PC-9 (cell line): ENCODE measurements at regions of chr14 and their contacts with region 1.

Region 1: GRCh38 chr14:74062829-74063190 is 21.4 kb downstream of the ALDH6A1 start:
- DNase-seq: peak; percentile 44 to 87
- H3K4me3 ChIP-seq: peak overlapping the region; percentile 7; the same call in 1 of the 2 replicates
- H3K27ac ChIP-seq: peak overlapping the region; percentile 75
- H3K4me1 ChIP-seq: peaks cover 40% of the 10 kb centered on the region
- H3K27me3 ChIP-seq: no peaks in the 10 kb centered on the region
- CTCF ChIP-seq: no peak

Region 2: DNA sequence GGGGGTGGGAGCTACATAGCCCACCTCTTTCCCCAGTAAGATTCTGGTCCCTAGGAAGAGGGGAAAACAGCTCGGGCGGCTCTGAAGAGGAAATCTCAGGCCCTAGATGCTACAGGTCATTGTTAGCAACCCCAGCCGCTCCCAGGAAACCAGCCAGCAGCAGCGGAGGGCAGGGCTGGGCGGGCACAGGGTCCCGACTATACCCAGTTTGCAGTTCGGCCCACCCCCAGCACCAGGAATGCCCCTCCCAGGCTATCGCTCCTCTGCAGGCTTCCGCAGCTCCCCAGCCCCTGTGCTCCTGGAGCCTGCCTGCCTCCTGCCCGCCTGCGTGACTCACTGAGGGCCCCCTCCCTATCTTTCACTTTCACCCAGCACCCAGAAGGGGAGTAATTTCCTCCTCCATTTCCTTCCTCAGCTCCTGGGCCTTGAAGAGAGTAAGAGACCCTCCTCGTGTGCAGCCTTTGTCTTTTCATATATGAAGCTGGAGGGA is 321.4 kb before region 1 on chr14:
- CTCF ChIA-PET with region 1: no interaction called
- POLR2A ChIA-PET with region 1: no interaction called
- intact Hi-C with region 1: no loop called
- DNase-seq: peak; percentile 84 to 93
- H3K4me3 ChIP-seq: peak overlapping the region; percentile 46; the same call in 1 of the 2 replicates
- H3K27ac ChIP-seq: peak overlapping the region; percentile 90
- H3K4me1 ChIP-seq: peaks cover 71% of the 10 kb centered on the region
- H3K27me3 ChIP-seq: no peaks in the 10 kb centered on the region
- CTCF ChIP-seq: no peak

Region 3: DNA sequence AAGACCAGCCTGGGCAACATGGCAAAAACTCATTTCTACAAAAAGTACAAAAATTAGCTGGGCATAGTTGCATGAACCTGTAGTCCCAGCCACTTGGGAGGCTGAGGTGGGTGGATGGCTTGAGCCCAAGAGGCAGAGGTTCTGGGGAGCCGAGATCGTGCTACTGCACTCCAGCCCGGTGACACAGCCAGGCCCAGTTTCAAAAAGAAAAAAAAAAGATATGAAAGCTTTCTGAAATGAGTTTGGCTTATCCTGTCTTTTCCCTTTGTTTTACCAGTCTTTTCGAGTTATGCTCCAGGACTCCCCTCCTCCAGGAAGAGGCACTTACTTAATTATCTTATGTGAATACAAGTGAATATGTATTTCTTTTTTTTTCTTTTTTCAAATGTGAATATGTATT is 40.5 kb before region 1 on chr14:
- CTCF ChIA-PET with region 1: no interaction called
- POLR2A ChIA-PET with region 1: no interaction called
- intact Hi-C with region 1: no loop called
- DNase-seq: no peak
- H3K4me3 ChIP-seq: no peak overlapping the region
- H3K27ac ChIP-seq: no peak overlapping the region
- H3K4me1 ChIP-seq: peaks cover 8% of the 10 kb centered on the region
- H3K27me3 ChIP-seq: no peaks in the 10 kb centered on the region
- CTCF ChIP-seq: no peak

Region 4: DNA sequence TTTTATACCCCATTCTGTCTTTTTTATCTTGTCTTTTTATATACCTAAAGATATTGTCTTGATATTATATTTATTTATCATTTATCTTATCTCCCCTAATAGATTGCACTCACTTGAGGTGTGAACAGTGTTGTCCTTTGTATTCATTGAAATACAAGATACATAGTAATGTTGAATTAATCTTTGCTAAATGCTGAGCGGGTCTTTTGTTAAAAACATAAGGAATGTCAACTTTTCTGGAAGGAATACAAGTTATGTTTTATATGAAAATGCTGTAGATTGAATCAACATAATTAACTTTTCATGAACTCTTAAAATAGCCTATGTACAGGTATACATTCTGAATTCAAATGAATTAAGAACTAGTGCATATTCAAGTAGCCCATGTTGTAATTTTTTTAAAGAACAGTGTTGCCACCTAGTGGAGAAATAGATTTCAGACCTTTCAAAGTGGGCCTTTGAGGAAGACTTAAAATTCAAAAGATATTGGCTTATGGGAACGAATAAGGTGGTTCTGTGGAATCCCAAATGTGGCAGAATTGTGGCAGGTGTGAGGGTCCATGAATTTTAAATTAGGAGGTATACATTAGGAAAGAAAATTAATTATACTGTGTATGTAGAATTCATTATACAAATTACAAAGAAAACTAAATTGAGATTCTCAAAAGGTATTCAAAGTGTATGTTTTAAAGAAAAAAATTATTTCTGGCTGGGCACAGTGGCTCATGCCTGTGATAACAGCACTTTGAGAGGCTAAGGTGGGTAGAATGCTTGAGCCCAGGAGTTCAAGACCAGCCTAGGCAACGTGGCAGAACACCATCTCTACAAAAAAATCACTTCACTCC is 24.6 kb before region 1 on chr14:
- CTCF ChIA-PET with region 1: no interaction called
- POLR2A ChIA-PET with region 1: interaction called, 39 read pairs
- intact Hi-C with region 1: no loop called
- DNase-seq: peak in 1 of 2 experiments; percentile 66
- H3K4me3 ChIP-seq: no peak overlapping the region
- H3K27ac ChIP-seq: no peak overlapping the region
- H3K4me1 ChIP-seq: no peaks in the 10 kb centered on the region
- H3K27me3 ChIP-seq: no peaks in the 10 kb centered on the region
- CTCF ChIP-seq: peak; percentile 96